ENCODE measurements at regions of chr15 and their contacts with region 1.

Region 1: DNA sequence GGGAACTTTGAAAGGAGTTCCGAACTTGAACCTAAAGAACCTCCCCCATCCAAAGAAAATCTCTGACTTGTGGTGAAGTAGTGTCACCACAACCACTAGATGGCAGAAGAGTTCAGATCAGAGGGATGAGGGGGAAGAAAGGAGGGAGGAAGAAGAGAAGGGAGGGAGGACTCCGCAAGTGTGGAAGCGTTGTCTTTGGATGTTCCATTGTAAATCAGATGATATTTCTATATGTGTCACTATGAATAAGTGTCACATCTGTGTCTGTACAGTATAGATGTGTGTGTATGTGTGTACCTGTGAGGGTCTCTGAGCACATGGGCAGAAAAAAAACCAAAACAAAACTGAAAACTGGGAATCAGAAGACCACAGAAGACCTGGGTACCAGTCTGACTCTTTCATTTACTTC is 16.9 kb downstream of the SLC24A1 start:
- DNase-seq: peak; percentile 58
- H3K4me3 Mint-ChIP-seq: no peak overlapping the region
- H3K27ac Mint-ChIP-seq: no peak overlapping the region
- H3K4me1 Mint-ChIP-seq: peaks cover 12% of the 10 kb centered on the region
- H3K27me3 Mint-ChIP-seq: peaks cover 10% of the 10 kb centered on the region
- CTCF ChIP-seq: peak; percentile 65

Region 2: GRCh38 chr15:65384895-65385858 is 253.5 kb before region 1 on chr15:
- CTCF ChIA-PET with region 1: no interaction called
- intact Hi-C with region 1: no loop called
- DNase-seq: peak; percentile 91
- H3K4me3 Mint-ChIP-seq: peak overlapping the region; percentile 53
- H3K27ac Mint-ChIP-seq: no peak overlapping the region
- H3K4me1 Mint-ChIP-seq: no peaks in the 10 kb centered on the region
- H3K27me3 Mint-ChIP-seq: peaks cover 82% of the 10 kb centered on the region
- CTCF ChIP-seq: peak; percentile 89

Region 3: DNA sequence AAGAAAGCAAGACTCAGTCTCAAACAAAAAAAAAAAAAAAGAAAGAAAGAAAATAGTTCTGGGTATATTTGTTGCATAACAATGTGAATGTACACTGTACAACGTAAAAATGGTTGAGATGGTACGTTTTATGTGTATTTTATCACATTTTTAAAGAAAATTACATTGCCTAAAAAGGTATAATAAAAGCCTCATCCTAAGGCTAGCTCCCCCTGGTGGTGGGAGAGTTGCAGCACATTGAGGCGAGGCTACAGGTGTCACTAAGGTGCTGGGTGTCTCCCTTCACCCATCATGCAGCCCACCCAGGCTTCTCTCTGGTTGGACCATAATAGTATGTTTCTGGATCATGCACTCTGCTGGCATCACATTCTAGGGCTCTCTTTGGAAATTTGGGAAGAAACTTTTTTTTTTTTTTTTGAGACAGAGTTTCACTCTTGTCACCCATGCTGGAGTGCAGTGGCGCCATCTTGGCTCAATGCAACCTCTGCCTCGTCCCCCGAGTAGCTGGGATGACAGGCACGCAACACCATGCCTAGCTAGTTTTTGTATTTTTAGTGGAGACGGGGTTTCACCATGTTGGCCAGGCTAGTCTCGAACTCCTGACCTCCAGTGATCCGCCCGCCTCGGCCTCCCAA is 218.3 kb after region 1 on chr15:
- CTCF ChIA-PET with region 1: no interaction called
- intact Hi-C with region 1: loop called (anchors 1 kb)
- DNase-seq: peak; percentile 88
- H3K4me3 Mint-ChIP-seq: no peak overlapping the region
- H3K27ac Mint-ChIP-seq: no peak overlapping the region
- H3K4me1 Mint-ChIP-seq: no peaks in the 10 kb centered on the region
- H3K27me3 Mint-ChIP-seq: no peaks in the 10 kb centered on the region
- CTCF ChIP-seq: peak; percentile 82

Region 4: GRCh38 chr15:65962187-65962586 is 323.5 kb after region 1 on chr15:
- CTCF ChIA-PET with region 1: no interaction called
- intact Hi-C with region 1: loop called (anchors 1 kb)
- DNase-seq: peak; percentile 58
- H3K4me3 Mint-ChIP-seq: no peak overlapping the region
- H3K27ac Mint-ChIP-seq: no peak overlapping the region
- H3K4me1 Mint-ChIP-seq: peaks cover 8% of the 10 kb centered on the region
- H3K27me3 Mint-ChIP-seq: peaks cover 5% of the 10 kb centered on the region
- CTCF ChIP-seq: no peak

Measured in Calu3 (cell line).